OCI-LY7 (cell line): ENCODE measurements at regions of chr18 and their contacts with region 1.

Region 1: DNA sequence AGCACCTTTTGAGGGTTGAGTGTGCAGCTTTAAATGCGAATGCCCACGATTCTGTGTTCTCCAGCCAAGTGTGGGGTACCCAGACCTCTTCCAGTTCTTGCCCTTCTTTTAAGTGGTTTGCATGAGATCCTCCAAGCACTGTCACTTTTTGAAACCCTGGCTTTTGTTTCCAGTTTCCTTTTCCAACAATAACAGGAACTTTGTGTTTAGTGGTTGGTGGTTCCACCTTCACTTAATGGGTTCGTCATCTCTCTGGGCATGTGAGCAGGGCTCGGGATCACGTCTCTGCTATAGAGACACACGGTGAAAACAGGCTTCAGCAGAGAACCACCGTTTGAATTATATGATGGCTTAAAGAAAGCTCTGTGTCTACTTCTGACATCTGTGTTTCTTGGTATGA is 197.6 kb downstream of the LDLRAD4 start:
- DNase-seq: no peak
- H3K4me3 ChIP-seq: no peak overlapping the region
- H3K27ac ChIP-seq: no peak overlapping the region
- H3K4me1 ChIP-seq: peaks cover 2% of the 10 kb centered on the region
- CTCF ChIP-seq: no peak

Region 2: DNA sequence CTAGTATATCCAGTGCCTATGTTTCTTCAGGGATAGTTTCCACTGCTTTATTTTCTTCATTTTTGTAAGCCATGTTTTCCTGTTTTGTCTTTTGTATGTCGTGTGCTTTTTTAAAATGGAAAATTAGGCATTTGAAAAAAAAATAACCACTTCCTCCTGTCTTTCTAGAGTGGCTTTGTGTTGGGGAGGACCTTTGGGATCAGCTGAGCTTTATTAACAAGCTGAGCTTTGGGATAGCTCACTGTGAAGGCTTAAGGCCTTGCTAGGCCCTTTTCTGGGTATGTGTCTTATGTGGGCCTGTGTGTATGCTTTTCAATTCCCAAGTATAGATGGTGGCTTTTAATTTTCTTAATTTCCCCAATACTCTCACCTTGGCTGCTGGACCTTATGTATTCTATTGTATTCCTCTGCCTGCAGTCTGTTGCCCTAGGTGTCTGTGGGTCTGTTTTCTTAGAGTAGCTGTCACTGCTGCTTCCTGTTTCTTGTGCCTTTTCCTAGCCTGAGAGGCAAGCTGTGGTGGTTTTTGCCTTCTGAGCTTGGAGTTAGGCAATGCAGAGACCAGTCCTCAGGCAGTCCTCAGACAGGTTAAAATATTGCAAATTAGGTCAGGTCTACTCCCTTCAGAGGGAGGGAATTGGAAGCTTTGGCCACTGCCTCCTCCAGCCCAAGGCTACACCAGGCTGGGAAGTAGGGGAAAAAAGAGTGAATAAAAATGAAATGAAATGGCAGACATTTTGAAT is 63.0 kb before region 1 on chr18:
- CTCF ChIA-PET with region 1: no interaction called
- POLR2A ChIA-PET with region 1: no interaction called
- intact Hi-C with region 1: loop called (anchors 10 kb)
- DNase-seq: no peak
- H3K4me3 ChIP-seq: no peak overlapping the region
- H3K27ac ChIP-seq: no peak overlapping the region
- H3K4me1 ChIP-seq: no peaks in the 10 kb centered on the region
- CTCF ChIP-seq: no peak

Region 3: DNA sequence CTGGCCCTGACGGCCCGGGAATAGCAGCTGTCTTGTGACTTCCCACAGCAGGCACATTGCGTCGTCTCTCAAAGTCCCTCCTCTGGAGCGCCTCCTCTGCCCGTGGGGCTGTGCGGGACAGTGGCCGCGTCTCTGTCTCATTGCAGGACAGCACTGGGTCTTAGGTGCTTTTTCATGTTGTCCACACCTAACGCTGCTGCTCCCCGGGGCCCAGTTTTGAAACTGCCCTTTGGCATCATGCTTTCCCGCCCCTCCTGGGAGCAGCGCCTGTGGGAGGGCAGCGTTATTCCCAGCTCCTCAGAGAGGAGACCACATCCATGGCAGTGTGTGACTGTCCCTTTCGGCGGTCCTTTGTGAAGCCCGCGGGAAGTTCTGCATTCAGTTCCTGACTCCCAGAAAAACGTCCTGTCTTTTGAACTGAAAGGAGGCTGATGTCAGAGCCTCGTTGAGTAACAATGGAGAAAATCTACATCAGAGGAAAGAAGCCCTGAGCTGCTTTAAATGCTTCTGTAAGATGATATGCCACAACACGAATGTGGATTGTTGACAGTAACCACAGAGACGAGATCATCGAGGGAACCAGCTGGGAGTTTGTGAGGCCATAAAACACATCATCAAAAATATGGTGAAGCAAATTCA is 84.1 kb after region 1 on chr18:
- CTCF ChIA-PET with region 1: no interaction called
- POLR2A ChIA-PET with region 1: no interaction called
- intact Hi-C with region 1: loop called (anchors 10 kb)
- DNase-seq: no peak
- H3K4me3 ChIP-seq: no peak overlapping the region
- H3K27ac ChIP-seq: no peak overlapping the region
- H3K4me1 ChIP-seq: no peaks in the 10 kb centered on the region
- CTCF ChIP-seq: no peak

Region 4: GRCh38 chr18:13530879-13531387 is 114.7 kb after region 1 on chr18:
- CTCF ChIA-PET with region 1: no interaction called
- POLR2A ChIA-PET with region 1: no interaction called
- intact Hi-C with region 1: loop called (anchors 10 kb)
- DNase-seq: peak; percentile 34
- H3K4me3 ChIP-seq: no peak overlapping the region
- H3K27ac ChIP-seq: no peak overlapping the region
- H3K4me1 ChIP-seq: no peaks in the 10 kb centered on the region
- CTCF ChIP-seq: peak; percentile 64